ENCODE measurements at regions of chr5 and their contacts with region 1.

Region 1: DNA sequence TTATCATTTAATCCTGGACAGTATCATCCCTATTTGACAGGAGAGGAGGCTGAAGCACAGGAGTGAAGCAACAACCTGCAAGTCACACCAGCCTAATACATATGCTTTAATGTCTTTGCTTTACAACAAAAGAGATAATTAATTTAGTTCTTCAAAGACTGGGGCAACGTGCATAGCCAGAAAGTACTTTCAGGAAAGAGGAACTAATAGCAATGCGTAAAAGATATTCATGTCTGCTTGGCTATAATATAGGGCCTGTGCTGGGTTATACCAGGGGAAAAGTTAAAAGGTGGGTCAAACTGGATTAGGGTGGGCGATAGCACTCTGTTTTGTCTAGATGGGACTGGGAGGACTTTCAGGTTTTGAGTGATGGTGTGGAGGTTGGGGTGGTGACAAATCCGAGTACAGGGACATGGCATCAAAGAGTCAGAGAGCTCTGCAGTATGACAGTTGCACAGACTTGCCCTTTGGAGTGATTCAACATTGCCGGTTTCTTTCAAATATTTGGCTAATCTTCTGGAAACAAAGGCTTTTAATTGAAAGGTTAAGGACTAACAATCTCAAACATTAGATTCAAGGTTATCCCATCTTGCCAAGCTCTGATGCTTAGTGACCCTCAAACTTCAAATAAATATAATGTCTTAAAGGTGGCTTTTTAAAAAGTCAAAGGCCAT is 11.9 kb downstream of the DAB2 start:
- DNase-seq: no peak
- H3K4me3 ChIP-seq: no peak overlapping the region
- H3K27ac ChIP-seq: no peak overlapping the region
- H3K4me1 ChIP-seq: peaks cover 0 to 5% (median 2%) of the 10 kb centered on the region in 4 experiments; a peak in 2 of 7 replicates
- H3K27me3 ChIP-seq: no peaks in the 10 kb centered on the region
- CTCF ChIP-seq: no peak
- EP300 ChIP-seq: no peak
- POLR2A ChIP-seq: no peak
- RAD21 ChIP-seq: no peak

Region 2: DNA sequence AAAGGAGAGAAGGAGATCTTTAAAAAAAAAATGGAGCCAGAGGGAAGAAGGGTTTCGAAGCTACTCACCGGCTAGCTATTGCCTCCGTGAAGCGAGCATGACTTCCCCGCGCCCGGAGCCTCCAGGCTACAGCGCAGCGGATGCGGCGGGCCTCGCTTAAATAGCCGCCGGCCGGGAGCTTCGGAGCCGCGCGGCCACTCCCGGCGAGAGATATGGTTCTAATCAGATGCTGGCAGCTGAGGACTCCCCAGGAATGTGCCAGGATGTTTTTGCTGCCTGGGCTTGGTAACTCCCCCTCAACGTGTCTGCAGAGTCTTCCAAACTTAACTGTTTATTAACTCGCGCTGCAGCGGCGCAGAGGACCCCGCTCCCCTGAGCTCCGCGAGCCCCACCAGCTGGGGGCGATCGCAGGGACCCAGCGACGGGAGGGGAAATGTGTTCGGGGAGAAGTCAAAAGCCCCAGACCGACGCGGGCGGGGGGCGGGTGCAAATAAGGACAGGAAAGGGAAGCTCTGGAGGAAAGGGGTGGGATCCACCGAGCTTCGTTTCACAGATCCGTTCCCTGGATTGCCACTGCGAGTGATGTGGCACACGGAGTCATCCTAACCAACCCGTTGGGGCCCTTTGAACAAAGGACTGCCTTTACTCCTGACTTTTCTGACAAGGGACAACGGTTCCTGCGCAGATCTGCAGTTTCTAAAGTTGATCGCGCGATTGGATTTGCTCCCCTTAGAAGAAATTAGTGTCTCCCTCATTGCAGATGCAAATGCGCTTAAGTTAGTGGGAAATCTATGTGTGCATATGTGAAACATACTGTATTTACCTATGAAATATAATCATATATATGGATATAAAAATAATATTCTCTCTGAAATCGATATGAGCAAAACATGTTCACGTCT is 12.1 kb after region 1 on chr5 and contains the start of gene DAB2:
- CTCF ChIA-PET with region 1: interaction called, 10 read pairs
- POLR2A ChIA-PET with region 1: interaction called, 8 read pairs
- DNase-seq: peak; percentile 68 to 88
- H3K4me3 ChIP-seq: peak within 1 kb of the TSS; percentile 49 to 66 (median 54)
- H3K27ac ChIP-seq: no peak within 1 kb of the TSS
- H3K4me1 ChIP-seq: peaks cover 2 to 12% (median 9%) of the 10 kb centered on the region in 4 experiments; a peak in 5 of 7 replicates
- H3K27me3 ChIP-seq: peaks cover 0 to 2% (median under 1%) of the 10 kb centered on the region in 4 experiments; a peak in 2 of 7 replicates
- CTCF ChIP-seq: peak; percentile 53 to 66 (median 63)
- EP300 ChIP-seq: no peak
- POLR2A ChIP-seq: 0 out of 3 replicates have a peak, but pooled peaks of 1 of the 2 experiments have one; percentile 20
- RAD21 ChIP-seq: peak; percentile 18 to 51; a peak in 3 of 4 replicates
- total RNA-seq, gene DAB2: 4.9 and 5.0 TPM in 2 replicates

Measured in H1 (cell line).